Naive thymus-derived CD4-positive, alpha-beta T cell (primary cell): ENCODE measurements at regions of chr2 and their contacts with region 1.

Region 1: GRCh38 chr2:186589612-186590349 is at the start of gene ITGAV:
- DNase-seq: peak; percentile 61 to 83 (median 79)
- ATAC-seq: peak; percentile 94
- H3K4me3 ChIP-seq: peak within 1 kb of the TSS; percentile 65
- H3K4me3 Mint-ChIP-seq: peak within 1 kb of the TSS; percentile 83 to 96 (median 90)
- H3K27ac ChIP-seq: peak within 1 kb of the TSS; percentile 71
- H3K27ac Mint-ChIP-seq: peak within 1 kb of the TSS; percentile 66 to 90 (median 82)
- H3K4me1 ChIP-seq: peaks cover 8 to 13% of the 10 kb centered on the region in 2 donors
- H3K4me1 Mint-ChIP-seq: peaks cover 15 to 46% (median 33%) of the 10 kb centered on the region in 7 donors
- H3K27me3 ChIP-seq: no peaks in the 10 kb centered on the region
- H3K27me3 Mint-ChIP-seq: peaks cover 0 to 14% (median 8%) of the 10 kb centered on the region in 5 donors
- total RNA-seq, gene ITGAV: 5.0 to 9.7 (median 7.2) TPM

Region 2: GRCh38 chr2:186399082-186399644 is 190.6 kb before region 1 on chr2:
- CTCF ChIA-PET with region 1: no interaction called
- POLR2A ChIA-PET with region 1: no interaction called
- intact Hi-C with region 1: no loop called
- DNase-seq: no peak
- ATAC-seq: no peak
- H3K4me3 ChIP-seq: no peak overlapping the region
- H3K4me3 Mint-ChIP-seq: no peak overlapping the region
- H3K27ac ChIP-seq: no peak overlapping the region
- H3K27ac Mint-ChIP-seq: no peak overlapping the region
- H3K4me1 ChIP-seq: no peaks in the 10 kb centered on the region
- H3K4me1 Mint-ChIP-seq: no peaks in the 10 kb centered on the region
- H3K27me3 ChIP-seq: no peaks in the 10 kb centered on the region
- H3K27me3 Mint-ChIP-seq: no peaks in the 10 kb centered on the region

Region 3: GRCh38 chr2:186503848-186504606 is 85.8 kb before region 1 on chr2:
- CTCF ChIA-PET with region 1: interaction called, 3 read pairs
- POLR2A ChIA-PET with region 1: interaction called, 6 read pairs
- intact Hi-C with region 1: loop called in 1 of 2 experiments (anchors 1 kb)
- DNase-seq: peak in 5 of 9 donors; percentile 17 to 24 (median 18)
- ATAC-seq: peak; percentile 56
- H3K4me3 ChIP-seq: no peak overlapping the region
- H3K4me3 Mint-ChIP-seq: no peak overlapping the region
- H3K27ac ChIP-seq: no peak overlapping the region
- H3K27ac Mint-ChIP-seq: peak overlapping the region in 5 of 9 donors; percentile 4 to 88 (median 53)
- H3K4me1 ChIP-seq: no peaks in the 10 kb centered on the region
- H3K4me1 Mint-ChIP-seq: peaks cover 7 to 30% (median 16%) of the 10 kb centered on the region in 7 donors
- H3K27me3 ChIP-seq: no peaks in the 10 kb centered on the region
- H3K27me3 Mint-ChIP-seq: no peaks in the 10 kb centered on the region

Region 4: GRCh38 chr2:186607660-186608324 is 18.0 kb after region 1 on chr2:
- CTCF ChIA-PET with region 1: no interaction called
- POLR2A ChIA-PET with region 1: no interaction called
- intact Hi-C with region 1: loop called in 1 of 2 experiments (anchors 2 kb)
- DNase-seq: no peak
- ATAC-seq: no peak
- H3K4me3 ChIP-seq: no peak overlapping the region
- H3K4me3 Mint-ChIP-seq: no peak overlapping the region
- H3K27ac ChIP-seq: no peak overlapping the region
- H3K27ac Mint-ChIP-seq: no peak overlapping the region
- H3K4me1 ChIP-seq: no peaks in the 10 kb centered on the region
- H3K4me1 Mint-ChIP-seq: peaks cover 0 to 1% (median 0%) of the 10 kb centered on the region in 7 donors
- H3K27me3 ChIP-seq: no peaks in the 10 kb centered on the region
- H3K27me3 Mint-ChIP-seq: no peaks in the 10 kb centered on the region

Region 5: DNA sequence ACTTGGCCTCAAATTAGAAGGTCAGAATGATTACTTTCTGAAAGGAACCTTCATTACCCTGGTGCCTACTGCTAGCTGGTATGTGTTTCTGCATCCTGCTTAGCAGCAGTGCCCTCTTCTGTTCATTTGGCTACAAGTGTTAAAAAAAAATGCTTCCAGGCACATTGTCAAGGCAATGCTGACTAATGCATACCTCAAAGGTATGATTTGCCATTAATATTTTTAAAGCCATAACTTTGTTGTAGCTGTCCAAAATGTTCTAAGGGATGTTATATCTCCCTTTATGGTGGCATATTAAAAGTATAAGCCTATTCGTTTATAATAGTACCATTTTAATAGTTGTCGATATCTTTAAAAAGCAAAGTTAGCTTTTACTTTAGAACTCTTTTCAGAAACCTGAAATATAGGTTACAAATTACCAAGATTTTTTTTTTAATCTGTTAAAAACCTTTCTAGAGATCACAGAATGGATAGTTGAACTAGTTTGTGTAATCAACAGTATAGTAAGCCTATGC is 52.1 kb after region 1 on chr2:
- CTCF ChIA-PET with region 1: interaction called, 4 read pairs
- POLR2A ChIA-PET with region 1: interaction called, 5 read pairs
- intact Hi-C with region 1: loop called (anchors 2 kb)
- DNase-seq: peak in 6 of 9 donors; percentile 13 to 54 (median 45)
- ATAC-seq: peak; percentile 73
- H3K4me3 ChIP-seq: no peak overlapping the region
- H3K4me3 Mint-ChIP-seq: no peak overlapping the region
- H3K27ac ChIP-seq: no peak overlapping the region
- H3K27ac Mint-ChIP-seq: peak overlapping the region in 1 of 9 donors; percentile 18
- H3K4me1 ChIP-seq: no peaks in the 10 kb centered on the region
- H3K4me1 Mint-ChIP-seq: peaks cover 0 to 26% (median 0%) of the 10 kb centered on the region in 7 donors
- H3K27me3 ChIP-seq: no peaks in the 10 kb centered on the region
- H3K27me3 Mint-ChIP-seq: no peaks in the 10 kb centered on the region

Region 6: GRCh38 chr2:186695081-186695756 is 105.4 kb after region 1 on chr2:
- CTCF ChIA-PET with region 1: no interaction called
- POLR2A ChIA-PET with region 1: no interaction called
- intact Hi-C with region 1: loop called in 1 of 2 experiments (anchors 5 kb)
- DNase-seq: peak in 1 of 9 donors; percentile 1
- ATAC-seq: no peak
- H3K4me3 ChIP-seq: no peak overlapping the region
- H3K4me3 Mint-ChIP-seq: peak overlapping the region in 9 of 10 donors; percentile 29 to 91 (median 80)
- H3K27ac ChIP-seq: no peak overlapping the region
- H3K27ac Mint-ChIP-seq: no peak overlapping the region
- H3K4me1 ChIP-seq: peaks cover 3 to 4% of the 10 kb centered on the region in 2 donors
- H3K4me1 Mint-ChIP-seq: peaks cover 6 to 12% (median 11%) of the 10 kb centered on the region in 7 donors
- H3K27me3 ChIP-seq: peaks cover 0 to 5% of the 10 kb centered on the region in 2 donors
- H3K27me3 Mint-ChIP-seq: peaks cover 52 to 70% (median 57%) of the 10 kb centered on the region in 5 donors